Activated CD8-positive, alpha-beta T cell treated with anti-CD3 and anti-CD28 coated beads, Interleukin-2, amount 10 ng/mL, durations not matched to agents 7 days and 5 days (primary cell): ENCODE measurements at regions of chr16 and their contacts with region 1.

Region 1: GRCh38 chr16:66894948-66895688 is 14.8 kb downstream of the PDP2 start:
- DNase-seq: peak; percentile 82
- ATAC-seq: peak; percentile 94
- H3K4me3 Mint-ChIP-seq: no peak overlapping the region
- H3K27ac Mint-ChIP-seq: peak overlapping the region; percentile 51
- H3K4me1 Mint-ChIP-seq: peaks cover 22% of the 10 kb centered on the region
- H3K27me3 Mint-ChIP-seq: no peaks in the 10 kb centered on the region

Region 2: GRCh38 chr16:66858740-66859396 is 36.2 kb before region 1 on chr16:
- CTCF ChIA-PET with region 1: no interaction called
- POLR2A ChIA-PET with region 1: no interaction called
- DNase-seq: no peak
- ATAC-seq: no peak
- H3K4me3 Mint-ChIP-seq: no peak overlapping the region
- H3K27ac Mint-ChIP-seq: no peak overlapping the region
- H3K4me1 Mint-ChIP-seq: no peaks in the 10 kb centered on the region
- H3K27me3 Mint-ChIP-seq: no peaks in the 10 kb centered on the region

Region 3: GRCh38 chr16:66880288-66881013 is 14.7 kb before region 1 on chr16 and contains the start of gene PDP2:
- CTCF ChIA-PET with region 1: interaction called, 30 read pairs
- POLR2A ChIA-PET with region 1: interaction called, 5 read pairs
- DNase-seq: peak; percentile 95
- ATAC-seq: peak; percentile 98
- H3K4me3 Mint-ChIP-seq: peak within 1 kb of the TSS; percentile 100
- H3K27ac Mint-ChIP-seq: peak within 1 kb of the TSS; percentile 98
- H3K4me1 Mint-ChIP-seq: peaks cover 65% of the 10 kb centered on the region
- H3K27me3 Mint-ChIP-seq: no peaks in the 10 kb centered on the region
- total RNA-seq, gene PDP2: 24.2 to 26.9 TPM

Region 4: GRCh38 chr16:66905633-66906539 is 10.8 kb after region 1 on chr16:
- CTCF ChIA-PET with region 1: interaction called, 27 read pairs
- POLR2A ChIA-PET with region 1: interaction called, 3 read pairs
- DNase-seq: peak; percentile 72
- ATAC-seq: peak; percentile 58
- H3K4me3 Mint-ChIP-seq: no peak overlapping the region
- H3K27ac Mint-ChIP-seq: no peak overlapping the region
- H3K4me1 Mint-ChIP-seq: peaks cover 6% of the 10 kb centered on the region
- H3K27me3 Mint-ChIP-seq: no peaks in the 10 kb centered on the region

Region 5: DNA sequence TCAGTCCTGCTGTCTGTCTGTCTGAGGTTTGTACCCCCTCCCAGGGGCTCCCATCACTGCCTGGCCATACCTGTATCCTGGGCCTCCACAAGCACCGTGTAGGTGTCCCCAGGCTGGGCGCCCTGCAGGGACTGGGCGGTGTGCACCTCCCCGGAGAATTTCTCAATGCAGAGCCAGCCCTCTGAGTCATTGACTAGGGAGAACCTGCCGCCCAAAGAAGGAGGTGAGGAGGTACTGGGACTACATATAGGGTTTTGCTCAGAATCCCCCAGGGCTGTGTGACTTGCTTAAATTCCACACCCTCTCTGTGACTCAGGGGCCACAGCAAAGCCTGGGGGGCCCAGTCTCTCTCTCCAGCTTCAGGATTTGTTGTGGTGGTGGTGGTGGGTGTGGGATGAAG is 16.0 kb after region 1 on chr16:
- CTCF ChIA-PET with region 1: interaction called, 27 read pairs
- POLR2A ChIA-PET with region 1: interaction called, 3 read pairs
- DNase-seq: no peak
- ATAC-seq: no peak
- H3K4me3 Mint-ChIP-seq: no peak overlapping the region
- H3K27ac Mint-ChIP-seq: no peak overlapping the region
- H3K4me1 Mint-ChIP-seq: peaks cover 2% of the 10 kb centered on the region
- H3K27me3 Mint-ChIP-seq: no peaks in the 10 kb centered on the region

Region 6: DNA sequence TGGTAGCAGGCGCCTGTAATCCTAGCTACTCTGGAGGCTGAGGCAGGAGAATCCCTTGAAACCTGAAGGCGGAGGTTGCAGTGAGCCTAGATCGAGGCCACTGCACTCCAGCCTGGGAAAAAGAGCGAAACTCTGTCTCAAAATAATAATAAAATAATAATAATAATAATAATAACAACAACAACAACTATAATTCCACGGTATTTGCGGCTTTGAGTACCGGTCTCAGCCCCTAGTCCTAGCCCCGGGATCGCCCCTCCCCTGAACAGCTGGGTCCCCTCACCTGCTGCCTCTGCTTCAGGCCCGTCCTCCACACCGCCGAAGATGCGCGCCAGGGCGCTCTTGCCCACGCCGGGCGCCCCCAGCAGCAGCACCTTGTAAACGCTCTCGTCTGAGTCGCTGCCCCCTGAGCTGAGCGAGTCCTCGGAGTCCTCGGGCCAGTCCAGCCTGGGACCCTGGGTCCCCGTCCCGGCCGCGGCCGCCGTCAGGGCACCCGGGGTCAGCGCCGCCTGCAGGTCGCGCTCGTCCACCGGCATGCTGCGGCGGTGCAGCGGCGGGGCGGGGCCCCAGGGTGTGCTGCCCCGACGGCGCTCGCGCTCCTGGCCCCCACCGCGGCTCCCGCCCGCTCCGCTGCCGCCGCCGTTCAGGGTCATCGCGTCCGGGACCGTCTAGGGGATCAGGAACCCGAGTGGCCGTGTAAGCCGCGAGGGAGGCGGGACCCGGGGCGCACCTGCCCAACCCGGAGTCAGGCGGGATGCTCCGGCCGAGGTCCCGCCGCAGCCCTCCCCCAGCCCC is 29.6 kb after region 1 on chr16:
- CTCF ChIA-PET with region 1: interaction called, 94 read pairs
- POLR2A ChIA-PET with region 1: interaction called, 8 read pairs
- DNase-seq: peak; percentile 52
- ATAC-seq: peak; percentile 75
- H3K4me3 Mint-ChIP-seq: peak overlapping the region; percentile 53
- H3K27ac Mint-ChIP-seq: no peak overlapping the region
- H3K4me1 Mint-ChIP-seq: peaks cover 22% of the 10 kb centered on the region
- H3K27me3 Mint-ChIP-seq: peaks cover 34% of the 10 kb centered on the region

Region 7: DNA sequence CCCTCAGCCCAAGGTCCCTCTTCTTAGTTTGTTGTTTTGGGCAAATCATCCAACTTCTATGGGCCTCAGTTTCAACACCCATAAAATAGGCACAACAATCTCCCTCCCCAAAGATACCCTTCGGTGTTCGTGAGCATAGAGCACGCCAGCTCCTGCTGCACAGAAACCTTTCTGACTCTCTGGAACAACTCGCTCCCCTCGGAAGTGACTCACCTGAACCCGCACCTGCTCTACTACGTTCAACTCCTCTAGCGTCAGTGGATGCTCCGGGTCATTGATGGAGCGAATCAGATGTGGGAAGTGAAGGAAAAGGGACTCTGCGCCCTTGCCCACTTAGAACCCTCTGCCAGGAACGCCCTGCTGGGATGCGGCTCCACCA is 38.6 kb after region 1 on chr16:
- CTCF ChIA-PET with region 1: interaction called, 94 read pairs
- POLR2A ChIA-PET with region 1: interaction called, 9 read pairs
- DNase-seq: no peak
- ATAC-seq: peak; percentile 40
- H3K4me3 Mint-ChIP-seq: peak overlapping the region; percentile 99
- H3K27ac Mint-ChIP-seq: peak overlapping the region; percentile 98
- H3K4me1 Mint-ChIP-seq: peaks cover 49% of the 10 kb centered on the region
- H3K27me3 Mint-ChIP-seq: no peaks in the 10 kb centered on the region

Region 8: GRCh38 chr16:66961065-66961744 is 66.1 kb after region 1 on chr16 and contains the start of gene CES3:
- CTCF ChIA-PET with region 1: interaction called, 13 read pairs
- POLR2A ChIA-PET with region 1: no interaction called
- DNase-seq: peak; percentile 79
- ATAC-seq: peak; percentile 97
- H3K4me3 Mint-ChIP-seq: peak within 1 kb of the TSS; percentile 48
- H3K27ac Mint-ChIP-seq: peak within 1 kb of the TSS; percentile 86
- H3K4me1 Mint-ChIP-seq: peaks cover 39% of the 10 kb centered on the region
- H3K27me3 Mint-ChIP-seq: peaks cover 2% of the 10 kb centered on the region
- total RNA-seq, gene CES3: 2.4 to 4.3 TPM